Naive thymus-derived CD4-positive, alpha-beta T cell (primary cell): ENCODE measurements at regions of chr17 and their contacts with region 1.

Region 1: DNA sequence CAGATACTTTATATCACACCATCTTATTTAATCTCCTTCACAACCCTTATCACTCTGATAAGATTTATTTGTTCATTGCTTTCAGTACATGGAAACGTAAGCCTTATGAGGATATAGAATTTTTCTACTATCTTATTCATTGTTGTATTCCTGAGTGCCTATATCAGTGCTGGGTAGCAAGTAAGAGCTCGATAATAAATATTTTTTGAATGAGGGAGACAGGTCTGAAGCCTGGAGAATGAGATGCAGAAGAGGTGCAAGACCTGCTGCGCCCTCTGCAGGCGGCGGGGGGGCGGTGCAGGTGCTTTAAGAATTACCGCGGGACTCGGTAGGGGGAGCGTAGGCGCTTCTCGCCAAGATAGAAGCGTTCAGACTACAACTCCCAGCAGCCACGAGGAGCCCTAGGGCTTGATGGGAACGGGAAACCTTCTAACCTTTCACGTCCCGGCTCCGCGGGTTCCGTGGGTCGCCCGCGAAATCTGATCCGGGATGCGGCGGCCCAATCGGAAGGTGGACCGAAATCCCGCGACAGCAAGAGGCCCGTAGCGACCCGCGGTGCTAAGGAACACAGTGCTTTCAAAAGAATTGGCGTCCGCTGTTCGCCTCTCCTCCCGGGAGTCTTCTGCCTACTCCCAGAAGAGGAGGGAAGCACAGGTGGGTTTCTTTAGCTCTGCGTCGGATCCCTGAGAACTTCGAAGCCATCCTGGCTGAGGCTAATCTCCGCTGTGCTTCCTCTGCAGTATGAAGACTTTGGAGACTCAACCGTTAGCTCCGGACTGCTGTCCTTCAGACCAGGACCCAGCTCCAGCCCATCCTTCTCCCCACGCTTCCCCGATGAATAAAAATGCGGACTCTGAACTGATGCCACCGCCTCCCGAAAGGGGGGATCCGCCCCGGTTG is at the start of gene WRAP53:
- DNase-seq: peak; percentile 93 to 97 (median 96)
- ATAC-seq: peak; percentile 89
- H3K4me3 ChIP-seq: peak within 1 kb of the TSS; percentile 96
- H3K4me3 Mint-ChIP-seq: peak within 1 kb of the TSS; percentile 95 to 99 (median 97)
- H3K27ac ChIP-seq: peak within 1 kb of the TSS; percentile 96
- H3K27ac Mint-ChIP-seq: peak within 1 kb of the TSS; percentile 99 to 100 (median 100)
- H3K4me1 ChIP-seq: peaks cover 28 to 31% of the 10 kb centered on the region in 2 donors
- H3K4me1 Mint-ChIP-seq: peaks cover 31 to 47% (median 41%) of the 10 kb centered on the region in 7 donors
- H3K27me3 ChIP-seq: no peaks in the 10 kb centered on the region
- H3K27me3 Mint-ChIP-seq: no peaks in the 10 kb centered on the region
- total RNA-seq, gene WRAP53: 6.7 to 21.1 (median 9.6) TPM

Region 2: GRCh38 chr17:7014261-7014994 is 673.7 kb before region 1 on chr17:
- CTCF ChIA-PET with region 1: no interaction called
- POLR2A ChIA-PET with region 1: no interaction called
- intact Hi-C with region 1: loop called in 1 of 2 experiments (anchors 1 kb)
- DNase-seq: peak; percentile 96 to 98 (median 97)
- ATAC-seq: peak; percentile 89
- H3K4me3 ChIP-seq: peak overlapping the region; percentile 97
- H3K4me3 Mint-ChIP-seq: peak overlapping the region; percentile 85 to 99 (median 97)
- H3K27ac ChIP-seq: peak overlapping the region; percentile 99
- H3K27ac Mint-ChIP-seq: peak overlapping the region; percentile 97 to 100 (median 100)
- H3K4me1 ChIP-seq: peaks cover 31 to 52% of the 10 kb centered on the region in 2 donors
- H3K4me1 Mint-ChIP-seq: peaks cover 30 to 81% (median 63%) of the 10 kb centered on the region in 7 donors
- H3K27me3 ChIP-seq: no peaks in the 10 kb centered on the region
- H3K27me3 Mint-ChIP-seq: no peaks in the 10 kb centered on the region

Region 3: DNA sequence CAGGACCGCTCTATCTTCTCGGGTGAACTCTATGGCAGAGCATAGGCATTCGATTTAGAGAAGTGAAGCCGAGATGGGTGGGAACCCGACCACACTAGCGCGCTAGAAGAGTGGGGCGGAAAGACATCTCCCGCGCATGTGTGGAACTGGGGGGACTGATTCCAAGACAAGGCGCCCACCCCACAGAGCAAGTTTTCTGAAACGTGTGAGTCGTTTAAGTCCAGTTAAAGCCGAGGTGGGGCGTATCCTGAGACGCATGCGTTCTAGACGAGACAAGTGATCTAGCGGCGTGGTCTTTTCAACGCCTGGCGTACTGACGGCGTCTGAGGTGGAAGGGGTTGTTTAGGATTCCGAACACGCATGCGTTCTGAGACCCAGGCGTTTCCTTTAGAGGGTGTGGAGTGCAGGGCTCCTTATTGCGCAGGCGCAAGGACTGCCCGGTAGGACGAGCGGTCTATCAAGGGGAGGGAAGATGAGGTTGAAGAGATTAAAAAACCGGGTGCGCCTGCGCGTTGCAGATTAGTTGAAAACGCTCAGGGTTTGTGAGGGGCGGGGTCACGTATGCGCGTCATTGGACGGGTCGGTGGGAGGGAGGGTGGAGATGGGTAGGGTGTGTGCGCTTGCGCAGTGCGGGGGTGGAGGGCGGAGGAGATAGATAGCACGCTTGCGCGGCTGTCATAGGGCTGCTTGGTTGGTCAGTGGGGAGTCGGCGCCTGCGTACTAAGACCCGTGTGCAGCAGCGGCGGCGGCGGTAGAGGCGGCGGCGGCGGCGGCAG is 381.1 kb before region 1 on chr17 and contains the start of gene EIF5A:
- CTCF ChIA-PET with region 1: no interaction called
- POLR2A ChIA-PET with region 1: no interaction called
- intact Hi-C with region 1: loop called (anchors 1 to 2 kb)
- DNase-seq: peak; percentile 99 to 100 (median 100)
- ATAC-seq: peak; percentile 79
- H3K4me3 ChIP-seq: peak within 1 kb of the TSS; percentile 78
- H3K4me3 Mint-ChIP-seq: peak within 1 kb of the TSS; percentile 90 to 99 (median 95)
- H3K27ac ChIP-seq: peak within 1 kb of the TSS; percentile 100
- H3K27ac Mint-ChIP-seq: peak within 1 kb of the TSS; percentile 98 to 100 (median 99)
- H3K4me1 ChIP-seq: peaks cover 19 to 20% of the 10 kb centered on the region in 2 donors
- H3K4me1 Mint-ChIP-seq: peaks cover 28 to 44% (median 35%) of the 10 kb centered on the region in 7 donors
- H3K27me3 ChIP-seq: no peaks in the 10 kb centered on the region
- H3K27me3 Mint-ChIP-seq: peaks cover 0 to 9% (median 0%) of the 10 kb centered on the region in 5 donors
- total RNA-seq, gene EIF5A: 237 to 666 (median 453) TPM

Region 4: GRCh38 chr17:7484067-7484918 is 203.9 kb before region 1 on chr17 and contains the start of gene POLR2A:
- CTCF ChIA-PET with region 1: no interaction called
- POLR2A ChIA-PET with region 1: interaction called, 45 read pairs
- intact Hi-C with region 1: loop called (anchors 1 kb)
- DNase-seq: peak; percentile 97 to 99 (median 99)
- ATAC-seq: peak; percentile 80
- H3K4me3 ChIP-seq: peak within 1 kb of the TSS; percentile 100
- H3K4me3 Mint-ChIP-seq: peak within 1 kb of the TSS; percentile 86 to 100 (median 98)
- H3K27ac ChIP-seq: peak within 1 kb of the TSS; percentile 97
- H3K27ac Mint-ChIP-seq: peak within 1 kb of the TSS; percentile 99 to 100 (median 100)
- H3K4me1 ChIP-seq: peaks cover 38 to 55% of the 10 kb centered on the region in 2 donors
- H3K4me1 Mint-ChIP-seq: peaks cover 60 to 81% (median 72%) of the 10 kb centered on the region in 7 donors
- H3K27me3 ChIP-seq: no peaks in the 10 kb centered on the region
- H3K27me3 Mint-ChIP-seq: no peaks in the 10 kb centered on the region
- total RNA-seq, gene POLR2A: 165 to 501 (median 225) TPM

Region 5: DNA sequence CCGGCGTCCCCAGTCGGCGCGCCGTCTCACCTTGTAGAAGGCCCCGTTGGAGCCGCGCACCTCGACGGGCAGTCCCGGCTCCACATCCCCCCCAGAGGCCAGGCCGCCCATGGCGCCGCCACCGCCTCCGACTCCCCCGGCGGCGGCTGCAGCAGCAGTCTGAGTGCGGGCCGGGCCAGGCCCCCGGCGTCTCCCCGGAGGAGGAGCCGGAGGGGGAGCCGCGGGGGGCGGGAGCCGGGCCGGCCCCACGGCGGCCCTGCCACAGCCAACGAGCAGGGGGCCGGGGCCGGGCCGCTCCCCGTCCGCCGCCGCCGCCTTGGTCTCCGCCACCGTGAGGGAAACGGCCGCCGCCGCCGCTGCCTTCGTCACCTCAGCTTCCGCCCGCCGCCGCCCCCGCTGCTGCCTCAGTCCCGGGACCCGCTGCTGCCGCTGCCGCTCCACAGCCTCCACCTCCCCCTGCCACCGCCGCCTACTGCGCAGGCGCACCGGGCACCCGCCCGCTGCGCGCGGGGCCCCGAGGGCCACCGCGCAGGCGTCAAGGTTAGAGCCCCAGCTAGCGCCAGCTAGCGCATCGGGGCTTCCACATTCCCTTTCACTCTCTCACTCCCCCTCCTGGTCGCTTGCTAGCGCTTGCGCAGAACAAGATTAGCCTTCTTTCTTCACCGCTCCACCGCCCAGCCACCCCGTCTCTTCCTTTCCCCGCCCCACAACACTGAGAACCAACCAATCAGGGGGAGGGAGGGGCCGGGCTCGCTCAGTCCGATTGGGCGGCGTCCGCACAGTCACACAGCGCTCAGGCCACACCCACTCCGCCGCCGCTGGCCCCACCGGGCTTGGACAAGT is 73.5 kb before region 1 on chr17 and contains the start of gene FXR2:
- CTCF ChIA-PET with region 1: interaction called, 15 read pairs
- POLR2A ChIA-PET with region 1: interaction called, 101 read pairs
- intact Hi-C with region 1: loop called (anchors 1 kb)
- DNase-seq: peak; percentile 96 to 100 (median 99)
- ATAC-seq: peak; percentile 93
- H3K4me3 ChIP-seq: peak within 1 kb of the TSS; percentile 86
- H3K4me3 Mint-ChIP-seq: peak within 1 kb of the TSS; percentile 85 to 97 (median 92)
- H3K27ac ChIP-seq: peak within 1 kb of the TSS; percentile 81
- H3K27ac Mint-ChIP-seq: peak within 1 kb of the TSS; percentile 89 to 99 (median 97)
- H3K4me1 ChIP-seq: peaks cover 16 to 27% of the 10 kb centered on the region in 2 donors
- H3K4me1 Mint-ChIP-seq: peaks cover 29 to 47% (median 40%) of the 10 kb centered on the region in 7 donors
- H3K27me3 ChIP-seq: no peaks in the 10 kb centered on the region
- H3K27me3 Mint-ChIP-seq: peaks cover 0 to 6% (median 0%) of the 10 kb centered on the region in 5 donors
- total RNA-seq, gene FXR2: 24.6 to 46.9 (median 34.0) TPM

Region 6: DNA sequence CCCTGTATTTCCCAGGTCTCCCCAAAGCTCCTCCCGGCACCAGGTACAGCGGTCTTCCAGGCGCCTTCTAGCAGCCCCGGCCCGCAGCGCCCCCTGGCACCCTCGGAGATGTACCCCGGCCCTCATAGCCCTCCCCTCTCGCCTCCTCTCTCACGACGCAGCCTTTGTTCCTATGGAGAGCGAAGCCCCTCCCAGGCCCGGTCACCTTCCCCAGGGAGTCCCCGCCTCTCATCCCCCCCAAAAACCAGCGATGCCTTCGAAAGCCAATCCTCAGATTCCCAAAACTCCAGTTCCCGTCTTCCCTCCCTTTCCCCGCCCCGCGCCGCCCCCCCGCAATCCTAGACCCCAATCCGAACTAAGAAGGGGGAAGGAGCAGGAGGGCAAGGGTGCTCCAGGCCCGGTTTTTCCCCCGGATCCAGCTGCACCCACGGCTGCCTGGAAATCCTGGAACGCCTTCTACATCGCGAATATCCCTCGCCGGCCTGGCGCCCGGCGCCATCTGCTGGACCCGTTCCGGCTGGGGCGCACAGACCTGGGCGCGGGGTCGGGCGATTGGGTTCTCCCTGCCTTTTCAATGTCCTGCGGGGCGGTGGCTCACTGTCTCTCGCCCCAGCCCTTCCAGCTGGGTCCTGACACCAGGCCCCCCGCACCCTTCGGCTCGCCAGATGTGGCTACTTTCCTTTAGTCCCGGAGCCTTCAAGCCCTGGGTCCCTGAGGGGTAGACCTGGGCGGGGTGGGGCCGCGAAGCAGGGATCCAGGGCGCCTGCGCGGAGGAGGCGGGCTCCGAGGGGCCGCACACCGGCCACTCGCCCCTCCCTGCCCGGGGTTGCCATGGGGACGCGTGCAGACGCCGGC is 29.0 kb after region 1 on chr17 and contains the start of gene DNAH2:
- CTCF ChIA-PET with region 1: interaction called, 3 read pairs
- POLR2A ChIA-PET with region 1: interaction called, 3 read pairs
- intact Hi-C with region 1: loop called in 1 of 2 experiments (anchors 2 kb)
- DNase-seq: peak in 5 of 9 donors; percentile 14 to 63 (median 27)
- ATAC-seq: peak; percentile 49
- H3K4me3 ChIP-seq: peak within 1 kb of the TSS; percentile 20
- H3K4me3 Mint-ChIP-seq: peak within 1 kb of the TSS; percentile 26 to 85 (median 74)
- H3K27ac ChIP-seq: no peak within 1 kb of the TSS
- H3K27ac Mint-ChIP-seq: no peak within 1 kb of the TSS
- H3K4me1 ChIP-seq: peaks cover 4 to 11% of the 10 kb centered on the region in 2 donors
- H3K4me1 Mint-ChIP-seq: peaks cover 10 to 28% (median 15%) of the 10 kb centered on the region in 7 donors
- H3K27me3 ChIP-seq: peaks cover 6 to 16% of the 10 kb centered on the region in 2 donors
- H3K27me3 Mint-ChIP-seq: peaks cover 51 to 84% (median 67%) of the 10 kb centered on the region in 5 donors
- total RNA-seq, gene DNAH2: 0.03 TPM in 1 of 5 experiments, not detected in the others

Region 7: DNA sequence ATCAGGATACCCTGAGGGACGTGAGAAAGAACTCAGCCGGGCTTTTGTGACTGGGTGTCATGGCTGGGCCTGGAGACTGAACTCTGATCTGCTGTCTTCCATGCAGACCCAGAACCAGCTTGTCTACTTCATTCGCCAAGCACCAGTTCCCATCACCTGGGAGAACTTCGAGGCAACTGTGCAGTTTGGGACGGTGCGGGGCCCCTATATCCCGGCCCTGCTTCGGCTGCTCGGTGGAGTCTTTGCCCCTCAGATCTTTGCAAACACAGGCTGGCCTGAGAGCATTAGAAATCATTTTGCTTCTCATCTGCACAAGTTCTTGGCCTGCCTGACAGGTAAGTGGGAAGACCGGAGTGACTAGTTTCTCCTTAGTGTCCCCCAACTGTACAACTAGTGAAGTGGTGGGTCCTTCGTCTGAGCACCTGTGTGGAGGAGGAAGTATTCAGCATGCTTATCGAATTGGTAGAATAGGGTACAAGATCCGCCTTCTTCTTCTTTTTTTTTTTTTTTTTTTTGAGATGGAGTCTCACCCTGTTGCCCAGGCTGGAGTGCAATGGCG is 44.9 kb after region 1 on chr17:
- CTCF ChIA-PET with region 1: no interaction called
- POLR2A ChIA-PET with region 1: no interaction called
- intact Hi-C with region 1: no loop called
- DNase-seq: no peak
- ATAC-seq: no peak
- H3K4me3 ChIP-seq: no peak overlapping the region
- H3K4me3 Mint-ChIP-seq: no peak overlapping the region
- H3K27ac ChIP-seq: no peak overlapping the region
- H3K27ac Mint-ChIP-seq: no peak overlapping the region
- H3K4me1 ChIP-seq: no peaks in the 10 kb centered on the region
- H3K4me1 Mint-ChIP-seq: no peaks in the 10 kb centered on the region
- H3K27me3 ChIP-seq: no peaks in the 10 kb centered on the region
- H3K27me3 Mint-ChIP-seq: peaks cover 0 to 42% (median 6%) of the 10 kb centered on the region in 5 donors

Region 8: DNA sequence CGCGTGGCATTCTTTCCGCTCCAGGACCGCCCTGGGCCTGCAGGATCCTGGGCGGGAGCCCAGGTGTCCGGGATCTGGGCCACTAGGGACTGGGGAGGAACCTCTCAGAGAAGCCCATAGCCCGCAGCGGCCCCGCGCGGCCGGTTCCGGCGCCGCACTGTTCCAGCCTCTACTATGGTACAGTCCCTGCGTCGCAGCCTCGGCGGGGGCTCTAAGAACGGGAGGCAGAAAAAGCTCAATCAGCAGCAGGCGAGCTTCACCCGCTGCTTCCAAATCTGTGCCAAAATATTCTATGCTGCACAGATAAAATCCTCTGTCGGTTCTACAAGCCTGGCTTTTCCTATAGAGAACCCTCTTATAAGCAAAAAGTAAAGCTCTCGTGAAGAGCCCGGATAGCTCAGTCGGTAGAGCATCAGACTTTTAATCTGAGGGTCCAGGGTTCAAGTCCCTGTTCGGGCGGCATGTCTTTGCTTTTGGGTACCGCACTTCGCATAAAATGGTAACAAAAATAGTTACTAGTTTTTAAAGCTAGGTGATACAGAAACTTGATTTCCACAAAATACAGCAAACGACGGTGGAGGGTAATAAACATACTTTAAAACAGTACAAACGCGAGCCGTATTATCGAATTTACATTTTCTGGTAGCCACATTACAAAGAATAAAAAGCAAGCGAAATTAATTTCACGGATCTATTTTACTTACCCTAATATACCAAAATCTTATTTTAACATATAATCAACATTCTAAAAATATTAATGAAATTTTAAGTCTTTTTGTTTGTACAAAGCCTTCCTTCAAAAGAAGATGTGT is 430.8 kb after region 1 on chr17:
- CTCF ChIA-PET with region 1: no interaction called
- POLR2A ChIA-PET with region 1: interaction called, 3 read pairs
- intact Hi-C with region 1: loop called in 1 of 2 experiments (anchors 2 kb)
- DNase-seq: peak; percentile 78 to 92 (median 90)
- ATAC-seq: peak; percentile 76
- H3K4me3 ChIP-seq: peak overlapping the region; percentile 95
- H3K4me3 Mint-ChIP-seq: peak overlapping the region; percentile 88 to 99 (median 94)
- H3K27ac ChIP-seq: peak overlapping the region; percentile 64
- H3K27ac Mint-ChIP-seq: peak overlapping the region; percentile 94 to 100 (median 99)
- H3K4me1 ChIP-seq: peaks cover 44 to 46% of the 10 kb centered on the region in 2 donors
- H3K4me1 Mint-ChIP-seq: peaks cover 27 to 61% (median 53%) of the 10 kb centered on the region in 7 donors
- H3K27me3 ChIP-seq: peaks cover 0 to 12% of the 10 kb centered on the region in 2 donors
- H3K27me3 Mint-ChIP-seq: peaks cover 9 to 77% (median 45%) of the 10 kb centered on the region in 5 donors